GM18951 (cell line): ENCODE measurements at regions of chr3 and their contacts with region 1.

Region 1: DNA sequence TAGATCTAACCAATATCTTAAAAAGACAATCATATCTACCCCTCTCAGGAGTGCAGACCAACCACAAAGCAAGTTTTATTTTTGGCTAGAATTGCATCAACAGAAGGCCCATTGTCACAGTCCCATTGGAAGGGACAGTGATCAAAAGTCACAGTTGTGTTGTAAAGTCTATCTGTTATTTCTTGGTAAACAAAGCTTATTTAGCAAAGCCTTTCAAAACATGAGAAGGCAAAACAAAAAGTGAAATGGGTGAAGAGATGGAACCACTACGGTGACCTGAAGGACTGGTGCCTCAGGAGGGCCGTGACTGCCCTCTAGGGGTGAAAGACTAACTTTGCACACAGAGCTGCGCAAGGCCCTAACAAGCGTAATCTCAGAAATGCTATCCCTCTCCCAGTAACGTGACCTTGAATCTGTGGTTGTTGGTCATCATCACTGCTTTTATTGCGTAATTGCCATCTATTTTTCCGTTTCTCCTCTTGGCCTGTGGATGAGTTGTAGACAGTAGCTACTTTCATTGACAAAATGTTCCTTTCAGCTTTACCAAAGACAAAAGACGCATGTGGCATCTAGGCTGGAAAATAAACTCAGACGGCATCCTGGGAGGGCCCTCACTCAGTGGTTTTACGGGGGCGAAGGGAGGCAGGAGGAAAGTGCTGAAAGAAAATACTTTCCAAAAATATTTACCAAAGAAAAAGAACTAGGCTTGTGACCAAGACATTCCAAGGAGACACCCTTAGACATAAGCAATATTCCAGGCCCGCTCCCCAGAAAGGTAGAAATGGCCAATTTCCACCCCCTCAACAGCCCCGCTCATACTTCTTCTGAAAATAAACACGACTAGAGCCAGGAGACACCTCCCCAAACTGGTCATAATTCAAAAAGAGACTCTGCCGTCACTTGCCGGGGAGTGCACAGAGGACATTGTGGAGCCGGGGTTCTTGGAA is 79.4 kb downstream of the FRMD4B start:
- POLR2A ChIP-seq: no peak

Region 2: GRCh38 chr3:68664276-68664675 is 642.2 kb before region 1 on chr3:
- in situ Hi-C with region 1: no loop called
- POLR2A ChIP-seq: no peak

Region 3: DNA sequence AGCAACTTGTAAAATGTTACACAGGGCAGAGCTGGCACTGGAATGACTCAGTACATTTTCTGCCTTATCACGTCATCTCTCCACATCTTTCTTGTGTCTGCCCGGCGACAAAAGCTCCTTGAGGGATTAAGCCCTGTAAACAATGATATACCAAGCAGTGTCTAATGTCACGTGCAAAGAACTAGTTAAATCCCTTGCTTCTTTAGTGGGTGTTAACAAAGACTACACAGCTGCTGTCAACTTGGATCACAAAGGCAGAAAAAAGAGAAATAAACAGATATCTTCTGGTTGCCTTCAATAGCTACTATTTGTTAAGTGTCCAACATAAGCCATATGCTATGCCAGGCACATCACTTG is 127.4 kb after region 1 on chr3:
- in situ Hi-C with region 1: no loop called
- POLR2A ChIP-seq: no peak

Region 4: GRCh38 chr3:69671082-69671952 is 364.8 kb after region 1 on chr3:
- in situ Hi-C with region 1: loop called (anchors 25 kb)
- POLR2A ChIP-seq: no peak